GM10248 (cell line): ENCODE measurements at regions of chr2 and their contacts with region 1.

Region 1: DNA sequence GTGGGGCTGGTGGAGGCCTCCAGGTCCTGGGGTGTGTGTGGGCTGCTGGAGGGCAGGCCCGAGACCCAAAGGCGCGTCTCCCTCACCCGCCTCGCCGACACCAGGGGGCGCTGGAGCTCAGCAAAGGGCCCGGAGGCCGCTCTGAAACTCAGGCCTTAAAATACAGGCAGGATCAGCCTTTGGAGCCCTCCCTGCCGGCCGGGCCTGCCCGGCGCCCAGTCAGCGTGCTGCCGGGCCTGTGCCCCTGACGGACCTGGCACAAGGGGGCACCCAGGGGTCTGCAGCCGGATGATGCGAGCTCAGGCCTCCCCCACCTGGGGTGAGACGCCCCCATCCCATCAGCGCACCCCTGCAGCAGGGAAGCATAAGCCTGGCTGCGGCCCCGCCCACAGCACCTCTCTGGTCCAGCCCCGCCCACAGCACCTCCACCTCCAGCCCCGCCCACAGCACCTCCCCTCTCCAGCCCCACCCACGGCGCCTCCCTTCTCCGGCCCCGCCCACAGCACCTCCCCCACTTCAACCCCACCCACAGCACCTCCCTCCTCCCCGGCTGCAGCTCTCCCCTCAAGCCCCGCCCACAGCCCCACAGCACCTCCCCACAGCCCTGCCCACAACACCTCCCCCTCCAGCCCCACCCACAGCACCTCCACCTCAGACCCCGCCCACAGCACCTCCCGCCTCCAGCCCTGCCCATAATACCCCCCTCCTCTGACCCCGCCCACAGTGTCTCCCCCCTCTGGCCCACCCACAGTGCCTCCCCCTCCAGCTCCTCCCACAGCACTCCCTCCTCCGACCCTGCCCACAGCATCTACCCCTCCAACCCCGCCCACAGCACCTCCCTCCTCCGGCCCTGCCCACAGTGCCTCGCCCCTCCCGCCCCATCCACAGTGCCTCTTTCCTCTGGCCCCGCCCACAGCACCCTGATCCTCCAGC is 92.8 kb upstream of the OTOS start:
- DNase-seq: peak; percentile 76
- CTCF ChIP-seq: peak; percentile 66

Region 2: GRCh38 chr2:240277073-240277806 is 44.0 kb after region 1 on chr2:
- CTCF ChIA-PET with region 1: no interaction called
- POLR2A ChIA-PET with region 1: no interaction called
- DNase-seq: no peak
- CTCF ChIP-seq: no peak

Region 3: GRCh38 chr2:240437861-240438809 is 204.9 kb after region 1 on chr2:
- CTCF ChIA-PET with region 1: interaction called, 18 read pairs
- POLR2A ChIA-PET with region 1: no interaction called
- DNase-seq: peak; percentile 89
- CTCF ChIP-seq: peak; percentile 97